ENCODE measurements at regions of chr14 and their contacts with region 1.

Region 1: DNA sequence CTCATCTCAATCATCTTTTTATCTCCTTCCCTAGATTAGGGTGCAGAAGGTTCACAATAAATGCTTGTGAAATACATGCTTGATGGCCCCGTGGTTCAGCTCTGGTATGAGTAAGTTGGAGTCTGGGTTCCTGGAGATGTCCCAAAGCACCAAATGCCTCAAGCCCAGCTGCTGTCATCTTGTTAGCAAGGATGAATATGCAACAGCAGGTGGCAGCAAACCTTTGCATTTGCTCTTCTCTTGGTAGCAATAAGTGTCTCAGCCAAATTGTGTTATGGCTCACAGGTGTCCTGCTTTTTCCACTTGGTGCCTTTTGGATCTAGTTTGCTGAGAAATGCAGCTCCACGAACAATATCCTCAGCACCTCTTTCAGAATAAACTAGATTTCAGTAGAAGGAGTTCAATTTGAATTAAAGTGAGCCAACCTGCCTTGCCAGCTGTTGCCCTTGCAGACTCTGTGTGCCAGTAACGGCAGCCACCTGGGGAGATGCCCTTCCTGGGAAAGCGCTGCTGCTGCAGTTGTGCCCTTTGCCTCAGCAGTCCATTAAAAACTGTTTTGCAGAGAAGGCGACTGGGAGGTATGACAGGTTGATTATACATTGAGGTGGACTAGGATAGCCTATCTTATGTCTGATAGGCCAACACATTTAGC is 417.3 kb downstream of the SNAPC1 start:
- DNase-seq: peak; percentile 12
- ATAC-seq: no peak
- H3K4me3 ChIP-seq: no peak overlapping the region
- H3K27ac ChIP-seq: no peak overlapping the region
- H3K4me1 ChIP-seq: no peaks in the 10 kb centered on the region
- H3K27me3 ChIP-seq: no peaks in the 10 kb centered on the region
- CTCF ChIP-seq: peak; percentile 56

Region 2: DNA sequence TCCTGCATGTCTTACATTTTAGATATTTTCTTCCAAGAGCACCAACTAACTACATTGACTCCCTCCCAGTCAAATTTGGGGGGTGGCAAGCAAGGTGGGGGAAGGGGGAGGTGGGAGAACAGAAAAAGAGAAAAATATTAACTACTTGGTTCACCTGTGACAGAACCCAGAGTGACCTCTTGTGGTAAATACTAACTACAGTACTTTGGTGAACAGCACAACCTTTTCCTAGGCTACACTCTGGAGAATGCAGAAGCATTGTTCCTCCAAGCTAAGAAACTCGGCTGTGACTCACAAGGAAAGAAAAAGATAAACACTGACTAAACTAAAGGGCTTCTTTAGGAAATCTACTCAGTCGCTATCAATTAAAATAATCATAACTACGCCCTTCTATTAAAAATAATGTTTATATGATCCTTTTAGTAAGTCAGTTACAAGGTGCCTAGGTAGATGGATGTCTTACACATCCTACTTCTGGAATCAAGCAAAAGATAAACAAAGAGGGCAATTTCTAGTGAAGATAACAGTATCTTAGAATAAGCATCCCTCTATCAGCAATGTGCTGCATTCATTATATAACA is 860.4 kb after region 1 on chr14:
- CTCF ChIA-PET with region 1: interaction called, 3 read pairs
- POLR2A ChIA-PET with region 1: no interaction called
- in situ Hi-C with region 1: no loop called
- intact Hi-C with region 1: loop called (anchors 2 kb)
- DNase-seq: peak; percentile 13
- ATAC-seq: no peak
- H3K4me3 ChIP-seq: no peak overlapping the region
- H3K27ac ChIP-seq: no peak overlapping the region
- H3K4me1 ChIP-seq: no peaks in the 10 kb centered on the region
- H3K27me3 ChIP-seq: peaks cover 4% of the 10 kb centered on the region
- CTCF ChIP-seq: peak; percentile 65